ENCODE measurements at regions of chr19 and their contacts with region 1.

Region 1: GRCh38 chr19:42919511-42920021 is 1.9 kb upstream of the PSG6 start:
- DNase-seq: no peak
- H3K4me3 ChIP-seq: no peak overlapping the region
- H3K27ac ChIP-seq: no peak overlapping the region
- H3K4me1 ChIP-seq: no peaks in the 10 kb centered on the region
- H3K27me3 ChIP-seq: no peaks in the 10 kb centered on the region
- CTCF ChIP-seq: peak; percentile 50 to 61

Region 2: DNA sequence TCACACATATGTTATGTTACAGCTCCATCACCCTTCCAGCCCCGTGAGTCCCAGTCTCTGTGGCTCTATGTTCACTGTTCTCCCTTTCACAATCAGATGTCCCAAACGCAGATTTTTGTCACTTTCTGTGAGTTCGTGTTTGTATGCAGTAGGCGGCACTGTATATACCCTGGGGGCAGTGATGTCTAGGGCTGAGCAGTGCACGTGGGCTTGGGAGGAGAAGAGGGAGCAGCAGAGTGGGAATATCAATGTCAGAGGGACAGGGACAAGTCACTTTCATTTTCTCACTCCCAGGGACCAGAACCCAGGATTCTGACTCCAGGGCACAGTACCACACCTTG is 62.0 kb before region 1 on chr19:
- CTCF ChIA-PET with region 1: no interaction called
- dilution Hi-C with region 1: no loop called
- in situ Hi-C with region 1: no loop called
- intact Hi-C with region 1: loop called (anchors 5 kb)
- DNase-seq: no peak
- H3K4me3 ChIP-seq: no peak overlapping the region
- H3K27ac ChIP-seq: no peak overlapping the region
- H3K4me1 ChIP-seq: peaks cover 8% of the 10 kb centered on the region
- H3K27me3 ChIP-seq: no peaks in the 10 kb centered on the region
- CTCF ChIP-seq: no peak

Region 3: DNA sequence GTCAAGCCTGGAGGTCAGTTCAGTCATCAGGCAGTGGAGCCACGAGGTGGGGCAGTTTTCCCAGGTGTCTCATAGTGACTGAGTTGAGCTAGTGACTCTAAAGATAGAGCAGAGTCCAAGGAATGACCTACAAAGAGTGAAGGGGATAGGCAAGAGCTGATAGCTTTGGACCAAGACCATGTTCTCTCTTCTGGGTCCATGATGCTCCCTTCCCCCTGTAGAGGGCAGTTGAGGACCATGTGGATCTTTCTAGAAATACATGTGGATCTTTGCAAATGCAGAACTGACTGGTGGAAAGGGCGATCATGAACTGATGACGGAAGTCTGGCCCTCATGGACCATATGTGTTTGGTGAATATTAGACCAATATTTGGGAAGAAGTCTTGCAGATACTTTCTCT is 47.0 kb before region 1 on chr19:
- CTCF ChIA-PET with region 1: no interaction called
- dilution Hi-C with region 1: no loop called
- in situ Hi-C with region 1: no loop called
- intact Hi-C with region 1: loop called (anchors 1 kb)
- DNase-seq: no peak
- H3K4me3 ChIP-seq: no peak overlapping the region
- H3K27ac ChIP-seq: no peak overlapping the region
- H3K4me1 ChIP-seq: peaks cover 36% of the 10 kb centered on the region
- H3K27me3 ChIP-seq: no peaks in the 10 kb centered on the region
- CTCF ChIP-seq: peak; percentile 15 to 61

Region 4: DNA sequence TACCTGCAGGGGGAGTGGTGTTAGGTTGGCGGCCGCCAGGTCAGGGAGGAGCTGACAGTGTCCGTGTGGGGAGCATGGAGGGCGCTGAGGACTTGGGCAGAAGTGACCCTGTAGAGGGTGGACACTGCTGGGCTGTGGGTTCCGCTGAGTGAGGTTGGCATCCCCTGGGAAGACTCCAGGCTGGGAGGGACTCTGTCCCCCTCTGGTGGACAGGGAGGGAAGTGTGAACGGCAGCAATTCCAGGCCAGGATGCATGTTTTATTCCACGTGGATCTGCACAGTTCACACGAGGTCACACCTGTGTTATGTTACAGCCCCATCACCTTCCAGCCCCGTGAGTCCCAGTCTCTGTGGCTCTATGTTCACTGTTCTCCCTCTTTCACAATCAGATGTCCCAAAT is 38.3 kb before region 1 on chr19:
- CTCF ChIA-PET with region 1: no interaction called
- dilution Hi-C with region 1: no loop called
- in situ Hi-C with region 1: no loop called
- intact Hi-C with region 1: loop called (anchors 1 kb)
- DNase-seq: no peak
- H3K4me3 ChIP-seq: no peak overlapping the region
- H3K27ac ChIP-seq: no peak overlapping the region
- H3K4me1 ChIP-seq: peaks cover 26% of the 10 kb centered on the region
- H3K27me3 ChIP-seq: no peaks in the 10 kb centered on the region
- CTCF ChIP-seq: peak; percentile 58 to 73

Region 5: GRCh38 chr19:42965176-42965575 is 45.6 kb after region 1 on chr19:
- CTCF ChIA-PET with region 1: no interaction called
- dilution Hi-C with region 1: no loop called
- in situ Hi-C with region 1: no loop called
- intact Hi-C with region 1: no loop called
- DNase-seq: peak; percentile 12
- H3K4me3 ChIP-seq: no peak overlapping the region
- H3K27ac ChIP-seq: peak overlapping the region; percentile 10
- H3K4me1 ChIP-seq: peaks cover 7% of the 10 kb centered on the region
- H3K27me3 ChIP-seq: no peaks in the 10 kb centered on the region
- CTCF ChIP-seq: no peak

Region 6: GRCh38 chr19:43191191-43191590 is 271.6 kb after region 1 on chr19:
- CTCF ChIA-PET with region 1: no interaction called
- dilution Hi-C with region 1: no loop called
- in situ Hi-C with region 1: no loop called
- intact Hi-C with region 1: loop called (anchors 10 kb)
- DNase-seq: no peak
- H3K4me3 ChIP-seq: no peak overlapping the region
- H3K27ac ChIP-seq: no peak overlapping the region
- H3K4me1 ChIP-seq: no peaks in the 10 kb centered on the region
- H3K27me3 ChIP-seq: no peaks in the 10 kb centered on the region
- CTCF ChIP-seq: no peak

Region 7: GRCh38 chr19:43316592-43317319 is 397.2 kb after region 1 on chr19:
- CTCF ChIA-PET with region 1: no interaction called
- dilution Hi-C with region 1: no loop called
- in situ Hi-C with region 1: no loop called
- intact Hi-C with region 1: no loop called
- DNase-seq: no peak
- H3K4me3 ChIP-seq: no peak overlapping the region
- H3K27ac ChIP-seq: no peak overlapping the region
- H3K4me1 ChIP-seq: no peaks in the 10 kb centered on the region
- H3K27me3 ChIP-seq: no peaks in the 10 kb centered on the region
- CTCF ChIP-seq: peak; percentile 74 to 89